ENCODE measurements at regions of chr1 and their contacts with region 1.

Region 1: GRCh38 chr1:19485362-19486187 is at the start of gene CAPZB:
- DNase-seq: peak; percentile 87 to 97 (median 94)
- ATAC-seq: peak; percentile 85
- H3K4me3 ChIP-seq: peak within 1 kb of the TSS; percentile 85 to 96
- H3K4me3 Mint-ChIP-seq: peak within 1 kb of the TSS; percentile 91
- H3K27ac ChIP-seq: peak within 1 kb of the TSS; percentile 75 to 91
- H3K27ac Mint-ChIP-seq: peak within 1 kb of the TSS; percentile 97
- H3K4me1 ChIP-seq: peaks cover 59% of the 10 kb centered on the region
- H3K4me1 Mint-ChIP-seq: peaks cover 69% of the 10 kb centered on the region
- H3K27me3 ChIP-seq: no peaks in the 10 kb centered on the region
- H3K27me3 Mint-ChIP-seq: no peaks in the 10 kb centered on the region
- CTCF ChIP-seq: no peak
- total RNA-seq, gene CAPZB: 145 to 151 TPM

Region 2: GRCh38 chr1:19209990-19210771 is 275.4 kb before region 1 on chr1 and contains the start of gene UBR4:
- CTCF ChIA-PET with region 1: no interaction called
- POLR2A ChIA-PET with region 1: no interaction called
- intact Hi-C with region 1: loop called (anchors 5 to 10 kb)
- DNase-seq: peak; percentile 91 to 99 (median 97)
- ATAC-seq: peak; percentile 93
- H3K4me3 ChIP-seq: peak within 1 kb of the TSS; percentile 73 to 96
- H3K4me3 Mint-ChIP-seq: peak within 1 kb of the TSS; percentile 96
- H3K27ac ChIP-seq: peak within 1 kb of the TSS; percentile 86 to 96
- H3K27ac Mint-ChIP-seq: peak within 1 kb of the TSS; percentile 99
- H3K4me1 ChIP-seq: peaks cover 48% of the 10 kb centered on the region
- H3K4me1 Mint-ChIP-seq: peaks cover 76% of the 10 kb centered on the region
- H3K27me3 ChIP-seq: no peaks in the 10 kb centered on the region
- H3K27me3 Mint-ChIP-seq: no peaks in the 10 kb centered on the region
- CTCF ChIP-seq: no peak
- total RNA-seq, gene UBR4: 146 to 148 TPM

Region 3: DNA sequence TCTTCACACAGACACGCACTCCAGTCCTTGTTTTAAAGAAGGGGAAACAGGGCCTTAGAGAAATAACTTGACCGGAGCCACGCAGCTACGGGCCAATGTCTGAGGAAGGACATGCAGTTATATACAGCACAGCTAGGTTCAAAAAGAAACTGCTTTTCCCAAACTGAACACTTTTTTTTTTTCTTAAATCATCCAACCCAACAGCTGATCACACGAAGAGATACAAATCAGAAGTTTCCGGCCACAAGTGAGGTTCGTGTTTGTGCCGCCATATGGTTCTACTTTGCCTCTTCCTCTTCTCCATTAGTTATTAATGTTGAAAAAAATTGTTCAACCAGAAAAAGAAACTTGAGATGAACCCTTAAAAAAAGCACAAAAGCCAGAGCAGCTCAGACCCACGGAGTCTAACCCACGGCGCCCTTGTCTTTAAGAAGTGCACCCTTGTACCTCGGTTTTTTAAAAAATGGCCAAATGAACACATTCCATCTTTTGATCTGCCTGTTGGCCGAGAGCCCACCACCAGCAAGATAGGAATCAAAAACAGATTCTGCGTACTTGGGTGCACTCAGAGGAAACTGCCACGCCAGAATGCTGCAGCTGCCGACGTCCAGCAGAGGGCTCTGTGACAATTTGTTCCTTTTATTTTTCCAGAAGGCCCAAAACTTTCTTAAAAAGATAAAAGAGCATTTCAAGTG is 94.5 kb before region 1 on chr1:
- CTCF ChIA-PET with region 1: interaction called, 13 read pairs
- POLR2A ChIA-PET with region 1: interaction called, 3 read pairs
- intact Hi-C with region 1: loop called (anchors 2 to 5 kb)
- DNase-seq: peak; percentile 46 to 87 (median 68)
- ATAC-seq: peak; percentile 70
- H3K4me3 ChIP-seq: peak overlapping the region; percentile 34 to 38
- H3K4me3 Mint-ChIP-seq: peak overlapping the region; percentile 85
- H3K27ac ChIP-seq: peak overlapping the region; percentile 50 to 66
- H3K27ac Mint-ChIP-seq: peak overlapping the region; percentile 90
- H3K4me1 ChIP-seq: peaks cover 54% of the 10 kb centered on the region
- H3K4me1 Mint-ChIP-seq: peaks cover 77% of the 10 kb centered on the region
- H3K27me3 ChIP-seq: no peaks in the 10 kb centered on the region
- H3K27me3 Mint-ChIP-seq: no peaks in the 10 kb centered on the region
- CTCF ChIP-seq: peak; percentile 88

Region 4: DNA sequence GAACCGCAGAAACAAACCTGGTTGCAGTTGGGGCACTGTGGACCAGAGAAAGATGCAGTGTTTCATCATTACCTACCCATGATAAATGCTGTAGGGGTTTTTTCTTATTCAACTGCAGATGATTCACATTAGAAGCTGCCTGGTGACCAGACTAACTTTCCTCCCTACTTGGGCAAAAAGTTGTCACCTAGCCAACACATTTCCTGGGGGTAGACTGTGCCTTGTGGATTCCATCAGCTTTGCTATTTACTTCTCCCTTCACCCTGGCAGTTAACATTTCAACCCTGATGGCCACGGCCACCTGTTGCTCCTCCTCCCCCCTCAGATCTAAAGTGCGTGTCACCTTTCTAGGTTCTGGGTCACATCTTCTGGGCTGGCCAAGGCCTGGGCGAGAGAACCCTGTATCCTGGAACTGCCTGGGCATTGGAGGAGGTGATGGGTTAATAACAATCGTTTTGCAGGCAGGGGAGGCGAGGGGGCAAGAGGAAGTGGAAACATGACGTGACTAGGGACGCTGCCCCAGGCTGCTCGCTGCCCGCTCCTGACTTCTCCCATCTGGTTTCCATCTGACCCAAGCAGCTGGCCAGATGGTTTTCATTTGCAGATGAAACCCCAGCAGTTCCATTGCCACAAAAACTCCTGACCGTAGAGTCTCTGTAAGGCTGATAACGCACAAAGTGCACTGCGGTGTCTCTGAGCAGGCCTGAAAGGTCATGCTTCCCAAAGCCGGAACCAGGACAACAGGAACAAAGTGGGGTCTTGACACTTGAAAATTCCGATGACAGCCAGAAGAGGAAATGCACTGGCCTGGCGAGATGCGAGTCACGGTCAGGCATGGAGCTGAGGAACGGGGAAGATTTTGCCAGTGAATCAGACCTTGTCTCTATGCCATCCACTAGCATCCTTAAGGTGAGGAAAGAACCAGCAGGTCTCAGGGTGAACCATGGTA is 36.8 kb before region 1 on chr1:
- CTCF ChIA-PET with region 1: interaction called, 8 read pairs
- POLR2A ChIA-PET with region 1: interaction called, 6 read pairs
- intact Hi-C with region 1: loop called (anchors 5 kb)
- DNase-seq: peak in 3 of 9 experiments; percentile 27 to 43 (median 27)
- ATAC-seq: peak; percentile 45
- H3K4me3 ChIP-seq: no peak overlapping the region
- H3K4me3 Mint-ChIP-seq: peak overlapping the region; percentile 1
- H3K27ac ChIP-seq: peak overlapping the region in 1 of 2 experiments; percentile 38
- H3K27ac Mint-ChIP-seq: peak overlapping the region; percentile 88
- H3K4me1 ChIP-seq: peaks cover 86% of the 10 kb centered on the region
- H3K4me1 Mint-ChIP-seq: peaks cover 88% of the 10 kb centered on the region
- H3K27me3 ChIP-seq: no peaks in the 10 kb centered on the region
- H3K27me3 Mint-ChIP-seq: no peaks in the 10 kb centered on the region
- CTCF ChIP-seq: no peak

Region 5: DNA sequence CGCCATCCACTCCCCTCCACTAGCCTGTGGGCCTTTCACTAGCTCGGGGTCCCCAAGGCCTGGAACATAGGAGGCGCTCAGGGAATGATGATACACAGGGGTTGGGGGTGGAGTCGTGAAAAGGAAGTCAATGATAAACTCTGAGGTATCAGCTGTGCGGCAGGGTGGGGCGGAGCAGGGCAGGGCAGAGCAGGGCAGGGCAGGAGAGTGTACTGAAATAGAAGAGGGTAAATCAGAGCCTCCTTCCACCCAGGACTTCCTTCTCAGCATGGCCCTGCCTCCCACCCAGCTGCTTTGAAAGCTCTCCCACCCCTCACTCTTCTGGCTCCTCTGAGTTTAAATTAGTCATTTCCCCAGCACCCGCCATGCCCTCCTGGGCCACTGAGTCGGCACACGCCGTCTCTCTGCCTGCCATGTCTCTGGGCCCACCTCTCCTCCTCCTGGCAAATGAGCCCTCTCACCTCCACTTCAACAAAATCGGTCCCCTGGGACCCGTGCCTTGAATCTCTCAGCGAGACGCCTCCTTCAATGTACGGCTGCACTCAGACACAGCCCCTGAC is 17.1 kb before region 1 on chr1:
- CTCF ChIA-PET with region 1: interaction called, 22 read pairs
- POLR2A ChIA-PET with region 1: interaction called, 193 read pairs
- intact Hi-C with region 1: loop called (anchors 1 kb)
- DNase-seq: peak; percentile 19 to 85 (median 74)
- ATAC-seq: peak; percentile 85
- H3K4me3 ChIP-seq: peak overlapping the region in 1 of 2 experiments; percentile 41
- H3K4me3 Mint-ChIP-seq: peak overlapping the region; percentile 72
- H3K27ac ChIP-seq: peak overlapping the region; percentile 47 to 69
- H3K27ac Mint-ChIP-seq: peak overlapping the region; percentile 97
- H3K4me1 ChIP-seq: peaks cover 96% of the 10 kb centered on the region
- H3K4me1 Mint-ChIP-seq: peaks cover 91% of the 10 kb centered on the region
- H3K27me3 ChIP-seq: no peaks in the 10 kb centered on the region
- H3K27me3 Mint-ChIP-seq: no peaks in the 10 kb centered on the region
- CTCF ChIP-seq: no peak

Region 6: GRCh38 chr1:19582302-19582701 is 96.7 kb after region 1 on chr1:
- CTCF ChIA-PET with region 1: interaction called, 58 read pairs
- POLR2A ChIA-PET with region 1: interaction called, 6 read pairs
- intact Hi-C with region 1: loop called (anchors 1 to 5 kb)
- DNase-seq: peak; percentile 58 to 87 (median 80)
- ATAC-seq: peak; percentile 78
- H3K4me3 ChIP-seq: no peak overlapping the region
- H3K4me3 Mint-ChIP-seq: no peak overlapping the region
- H3K27ac ChIP-seq: no peak overlapping the region
- H3K27ac Mint-ChIP-seq: no peak overlapping the region
- H3K4me1 ChIP-seq: no peaks in the 10 kb centered on the region
- H3K4me1 Mint-ChIP-seq: peaks cover 8% of the 10 kb centered on the region
- H3K27me3 ChIP-seq: no peaks in the 10 kb centered on the region
- H3K27me3 Mint-ChIP-seq: no peaks in the 10 kb centered on the region
- CTCF ChIP-seq: peak; percentile 87

Region 7: GRCh38 chr1:19622204-19622603 is 136.6 kb after region 1 on chr1:
- CTCF ChIA-PET with region 1: no interaction called
- POLR2A ChIA-PET with region 1: no interaction called
- intact Hi-C with region 1: no loop called
- DNase-seq: no peak
- ATAC-seq: no peak
- H3K4me3 ChIP-seq: no peak overlapping the region
- H3K4me3 Mint-ChIP-seq: no peak overlapping the region
- H3K27ac ChIP-seq: no peak overlapping the region
- H3K27ac Mint-ChIP-seq: no peak overlapping the region
- H3K4me1 ChIP-seq: no peaks in the 10 kb centered on the region
- H3K4me1 Mint-ChIP-seq: peaks cover 25% of the 10 kb centered on the region
- H3K27me3 ChIP-seq: no peaks in the 10 kb centered on the region
- H3K27me3 Mint-ChIP-seq: no peaks in the 10 kb centered on the region
- CTCF ChIP-seq: no peak

Region 8: GRCh38 chr1:19643602-19644394 is 158.2 kb after region 1 on chr1 and contains the start of gene NBL1:
- CTCF ChIA-PET with region 1: interaction called, 3 read pairs
- POLR2A ChIA-PET with region 1: interaction called, 4 read pairs
- intact Hi-C with region 1: loop called in 1 of 2 experiments (anchors 2 kb)
- DNase-seq: peak; percentile 58 to 89 (median 77)
- ATAC-seq: peak; percentile 89
- H3K4me3 ChIP-seq: peak within 1 kb of the TSS; percentile 55 to 78
- H3K4me3 Mint-ChIP-seq: peak within 1 kb of the TSS; percentile 98
- H3K27ac ChIP-seq: peak within 1 kb of the TSS in 1 of 2 experiments; percentile 45
- H3K27ac Mint-ChIP-seq: peak within 1 kb of the TSS; percentile 95
- H3K4me1 ChIP-seq: peaks cover 32% of the 10 kb centered on the region
- H3K4me1 Mint-ChIP-seq: peaks cover 33% of the 10 kb centered on the region
- H3K27me3 ChIP-seq: peaks cover 0 to 2% of the 10 kb centered on the region in 2 experiments
- H3K27me3 Mint-ChIP-seq: peaks cover 16% of the 10 kb centered on the region
- CTCF ChIP-seq: no peak
- total RNA-seq, gene NBL1: 76.5 to 80.5 TPM

Region 9: GRCh38 chr1:19903600-19903999 is 418.0 kb after region 1 on chr1:
- CTCF ChIA-PET with region 1: no interaction called
- POLR2A ChIA-PET with region 1: no interaction called
- intact Hi-C with region 1: no loop called
- DNase-seq: no peak
- ATAC-seq: no peak
- H3K4me3 ChIP-seq: no peak overlapping the region
- H3K4me3 Mint-ChIP-seq: no peak overlapping the region
- H3K27ac ChIP-seq: no peak overlapping the region
- H3K27ac Mint-ChIP-seq: no peak overlapping the region
- H3K4me1 ChIP-seq: no peaks in the 10 kb centered on the region
- H3K4me1 Mint-ChIP-seq: no peaks in the 10 kb centered on the region
- H3K27me3 ChIP-seq: no peaks in the 10 kb centered on the region
- H3K27me3 Mint-ChIP-seq: no peaks in the 10 kb centered on the region
- CTCF ChIP-seq: no peak